ENCODE measurements at regions of chr20 and their contacts with region 1.

Region 1: DNA sequence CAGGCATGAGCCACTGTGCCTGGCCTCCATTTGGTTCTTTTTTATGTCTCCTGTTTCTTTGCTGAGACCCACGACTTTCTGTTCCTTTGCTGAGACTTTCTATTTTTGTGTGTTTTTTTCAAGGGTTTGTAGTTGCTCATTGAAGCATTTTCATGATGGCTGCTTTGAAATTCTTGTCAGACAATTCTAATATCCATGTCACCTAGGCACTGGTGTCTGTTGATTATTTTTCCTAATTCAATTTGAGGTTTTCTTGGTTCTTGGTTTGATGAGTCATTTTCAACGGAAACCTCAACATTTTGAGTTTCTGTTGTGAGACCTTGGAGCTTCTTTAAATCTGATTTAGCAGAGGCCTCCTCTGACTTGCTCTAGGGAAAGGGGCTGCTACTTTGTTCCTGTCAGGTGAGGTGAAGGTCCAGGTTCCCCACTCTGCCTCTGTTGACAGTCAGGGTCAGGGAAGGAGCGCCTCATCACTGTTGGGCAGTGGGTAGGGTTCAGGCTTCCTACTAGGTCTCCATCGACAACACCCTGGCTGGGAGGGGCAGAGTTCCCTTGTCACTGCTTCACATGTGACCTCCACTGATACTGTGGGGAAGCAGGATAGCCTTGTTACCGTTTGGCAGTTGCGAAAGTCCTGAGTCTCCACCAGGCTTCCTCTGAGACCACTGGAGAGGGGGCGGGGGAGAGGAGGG is 67.2 kb upstream of the RNF24 start:
- DNase-seq: no peak
- H3K4me3 ChIP-seq: no peak overlapping the region
- H3K27ac ChIP-seq: no peak overlapping the region
- H3K4me1 ChIP-seq: peaks cover 7% of the 10 kb centered on the region
- H3K27me3 ChIP-seq: no peaks in the 10 kb centered on the region
- CTCF ChIP-seq: no peak
- POLR2A ChIP-seq: no peak

Region 2: DNA sequence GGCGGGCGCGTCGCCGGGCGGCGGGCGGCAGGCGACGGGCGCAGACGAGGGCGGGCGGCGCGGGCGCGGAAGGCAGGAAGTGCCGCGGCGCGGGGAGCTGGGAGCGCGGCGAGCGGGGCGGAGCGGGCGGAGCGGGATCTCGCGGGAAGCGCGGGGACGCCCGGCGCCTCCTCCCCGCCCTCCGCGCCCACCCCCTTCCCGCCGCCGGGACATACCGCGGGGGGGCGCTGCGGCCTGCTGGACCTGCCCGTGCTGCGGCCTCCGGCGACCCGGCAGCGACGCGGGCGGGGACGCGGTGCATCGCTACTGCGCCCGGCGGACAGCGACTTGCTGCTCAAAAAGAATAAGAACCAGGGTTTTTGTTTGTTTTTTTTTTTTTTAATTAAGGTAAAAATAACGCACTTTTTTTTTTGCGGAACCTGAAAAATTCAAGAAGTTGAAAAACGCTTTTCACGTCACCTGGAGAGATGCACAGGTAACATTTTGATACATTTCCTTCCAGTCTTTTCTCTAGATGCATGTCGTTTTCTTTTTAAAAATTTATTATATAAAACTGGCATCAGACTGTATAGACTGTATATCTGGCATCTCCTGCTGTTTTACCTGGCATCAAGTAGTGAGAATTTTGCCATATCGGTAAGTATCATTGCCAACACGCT is 295.8 kb before region 1 on chr20 and contains the start of gene CENPB:
- CTCF ChIA-PET with region 1: interaction called, 12 read pairs
- POLR2A ChIA-PET with region 1: no interaction called
- dilution Hi-C with region 1: no loop called
- intact Hi-C with region 1: loop called (anchors 1 kb)
- DNase-seq: peak; percentile 83
- H3K4me3 ChIP-seq: peak within 1 kb of the TSS; percentile 30 to 62 (median 58)
- H3K27ac ChIP-seq: peak within 1 kb of the TSS; percentile 0
- H3K4me1 ChIP-seq: peaks cover 18% of the 10 kb centered on the region
- H3K27me3 ChIP-seq: no peaks in the 10 kb centered on the region
- CTCF ChIP-seq: peak; percentile 56 to 62
- POLR2A ChIP-seq: no peak
- total RNA-seq, gene CENPB: 82.2 and 90.3 TPM in 2 replicates

Region 3: GRCh38 chr20:3888622-3889488 is 193.7 kb before region 1 on chr20 and contains the start of gene PANK2:
- CTCF ChIA-PET with region 1: interaction called, 11 read pairs
- POLR2A ChIA-PET with region 1: no interaction called
- dilution Hi-C with region 1: no loop called
- intact Hi-C with region 1: loop called (anchors 1 kb)
- DNase-seq: peak; percentile 99
- H3K4me3 ChIP-seq: peak within 1 kb of the TSS; percentile 87 to 100 (median 99)
- H3K27ac ChIP-seq: peak within 1 kb of the TSS; percentile 93
- H3K4me1 ChIP-seq: peaks cover 40% of the 10 kb centered on the region
- H3K27me3 ChIP-seq: no peaks in the 10 kb centered on the region
- CTCF ChIP-seq: peak; percentile 28 to 46
- POLR2A ChIP-seq: peak; percentile 92
- total RNA-seq, gene PANK2: 54.3 and 55.3 TPM in 2 replicates

Region 4: GRCh38 chr20:3927486-3928291 is 154.9 kb before region 1 on chr20:
- CTCF ChIA-PET with region 1: interaction called, 7 read pairs
- POLR2A ChIA-PET with region 1: no interaction called
- dilution Hi-C with region 1: no loop called
- intact Hi-C with region 1: loop called (anchors 1 kb)
- DNase-seq: no peak
- H3K4me3 ChIP-seq: no peak overlapping the region
- H3K27ac ChIP-seq: no peak overlapping the region
- H3K4me1 ChIP-seq: peaks cover 9% of the 10 kb centered on the region
- H3K27me3 ChIP-seq: no peaks in the 10 kb centered on the region
- CTCF ChIP-seq: no peak
- POLR2A ChIP-seq: no peak

Region 5: DNA sequence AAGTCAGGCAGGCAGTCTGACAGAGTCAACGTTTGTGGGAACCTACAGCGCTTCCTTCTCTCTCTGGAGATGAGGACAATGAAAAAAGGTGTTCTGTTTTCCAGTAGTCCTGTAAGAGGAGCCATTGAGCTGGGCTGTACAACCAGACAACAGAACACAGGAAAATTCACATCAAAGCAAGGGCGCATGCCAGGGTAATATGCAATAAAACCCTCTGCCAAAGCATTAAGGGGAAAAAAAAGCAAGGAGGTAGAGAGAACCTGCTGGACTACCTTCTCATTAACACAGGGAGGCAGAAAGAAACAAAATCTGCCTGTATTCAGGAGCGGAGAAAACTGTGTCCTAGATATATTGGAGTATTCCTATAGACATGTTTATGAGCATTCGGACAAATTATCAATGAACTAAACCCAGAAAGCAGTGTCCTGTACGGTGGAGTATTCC is 68.5 kb before region 1 on chr20:
- CTCF ChIA-PET with region 1: interaction called, 71 read pairs
- POLR2A ChIA-PET with region 1: no interaction called
- dilution Hi-C with region 1: no loop called
- intact Hi-C with region 1: loop called (anchors 1 kb)
- DNase-seq: peak; percentile 77
- H3K4me3 ChIP-seq: peak overlapping the region in 1 of 3 experiments; percentile 68
- H3K27ac ChIP-seq: no peak overlapping the region
- H3K4me1 ChIP-seq: peaks cover 10% of the 10 kb centered on the region
- H3K27me3 ChIP-seq: no peaks in the 10 kb centered on the region
- CTCF ChIP-seq: peak; percentile 46 to 53
- POLR2A ChIP-seq: no peak

Region 6: DNA sequence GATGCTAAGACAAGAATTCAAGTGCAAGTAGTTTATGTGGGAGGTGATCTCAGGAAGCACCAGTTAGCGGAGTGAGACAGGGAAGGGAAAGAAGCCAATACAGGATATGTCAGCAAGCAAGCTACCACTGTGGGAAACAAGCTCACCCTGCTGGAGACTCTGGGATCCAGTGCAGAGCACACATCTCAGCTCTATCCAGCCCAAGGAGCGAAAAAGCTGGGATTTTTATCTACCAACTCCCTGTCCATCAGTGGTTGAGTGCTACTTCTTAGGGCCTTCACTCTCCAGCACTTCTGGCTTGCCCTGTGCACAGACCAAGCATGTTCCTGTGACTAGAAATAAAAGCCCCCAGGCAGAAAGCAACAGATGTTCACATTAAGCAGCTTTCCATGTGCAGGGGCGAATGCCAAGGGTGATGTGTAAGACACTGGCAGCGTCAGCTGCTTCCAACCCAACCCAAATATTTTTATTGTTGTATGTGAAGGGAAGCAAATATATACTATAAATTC is 56.4 kb before region 1 on chr20:
- CTCF ChIA-PET with region 1: interaction called, 12 read pairs
- POLR2A ChIA-PET with region 1: no interaction called
- dilution Hi-C with region 1: no loop called
- intact Hi-C with region 1: no loop called
- DNase-seq: peak; percentile 61
- H3K4me3 ChIP-seq: no peak overlapping the region
- H3K27ac ChIP-seq: no peak overlapping the region
- H3K4me1 ChIP-seq: no peaks in the 10 kb centered on the region
- H3K27me3 ChIP-seq: peaks cover 18 to 28% of the 10 kb centered on the region in 2 experiments
- CTCF ChIP-seq: peak in 1 of 2 donors; percentile 47
- POLR2A ChIP-seq: no peak

Region 7: GRCh38 chr20:4064144-4064909 is 18.2 kb before region 1 on chr20:
- CTCF ChIA-PET with region 1: interaction called, 13 read pairs
- POLR2A ChIA-PET with region 1: interaction called, 4 read pairs
- dilution Hi-C with region 1: no loop called
- intact Hi-C with region 1: no loop called
- DNase-seq: peak; percentile 96
- H3K4me3 ChIP-seq: peak overlapping the region in 1 of 3 experiments; percentile 8
- H3K27ac ChIP-seq: peak overlapping the region; percentile 90
- H3K4me1 ChIP-seq: peaks cover 41% of the 10 kb centered on the region
- H3K27me3 ChIP-seq: no peaks in the 10 kb centered on the region
- CTCF ChIP-seq: no peak
- POLR2A ChIP-seq: no peak

Region 8: GRCh38 chr20:4130404-4131189 is 48.0 kb after region 1 on chr20:
- CTCF ChIA-PET with region 1: no interaction called
- POLR2A ChIA-PET with region 1: no interaction called
- dilution Hi-C with region 1: no loop called
- intact Hi-C with region 1: no loop called
- DNase-seq: peak; percentile 68
- H3K4me3 ChIP-seq: no peak overlapping the region
- H3K27ac ChIP-seq: no peak overlapping the region
- H3K4me1 ChIP-seq: peaks cover 25% of the 10 kb centered on the region
- H3K27me3 ChIP-seq: no peaks in the 10 kb centered on the region
- CTCF ChIP-seq: no peak
- POLR2A ChIP-seq: no peak